HEK293T (cell line): ENCODE measurements at regions of chr15 and their contacts with region 1.

Region 1: GRCh38 chr15:78299101-78299930 is at the start of gene SKIC8:
- DNase-seq: peak; percentile 99

Region 2: DNA sequence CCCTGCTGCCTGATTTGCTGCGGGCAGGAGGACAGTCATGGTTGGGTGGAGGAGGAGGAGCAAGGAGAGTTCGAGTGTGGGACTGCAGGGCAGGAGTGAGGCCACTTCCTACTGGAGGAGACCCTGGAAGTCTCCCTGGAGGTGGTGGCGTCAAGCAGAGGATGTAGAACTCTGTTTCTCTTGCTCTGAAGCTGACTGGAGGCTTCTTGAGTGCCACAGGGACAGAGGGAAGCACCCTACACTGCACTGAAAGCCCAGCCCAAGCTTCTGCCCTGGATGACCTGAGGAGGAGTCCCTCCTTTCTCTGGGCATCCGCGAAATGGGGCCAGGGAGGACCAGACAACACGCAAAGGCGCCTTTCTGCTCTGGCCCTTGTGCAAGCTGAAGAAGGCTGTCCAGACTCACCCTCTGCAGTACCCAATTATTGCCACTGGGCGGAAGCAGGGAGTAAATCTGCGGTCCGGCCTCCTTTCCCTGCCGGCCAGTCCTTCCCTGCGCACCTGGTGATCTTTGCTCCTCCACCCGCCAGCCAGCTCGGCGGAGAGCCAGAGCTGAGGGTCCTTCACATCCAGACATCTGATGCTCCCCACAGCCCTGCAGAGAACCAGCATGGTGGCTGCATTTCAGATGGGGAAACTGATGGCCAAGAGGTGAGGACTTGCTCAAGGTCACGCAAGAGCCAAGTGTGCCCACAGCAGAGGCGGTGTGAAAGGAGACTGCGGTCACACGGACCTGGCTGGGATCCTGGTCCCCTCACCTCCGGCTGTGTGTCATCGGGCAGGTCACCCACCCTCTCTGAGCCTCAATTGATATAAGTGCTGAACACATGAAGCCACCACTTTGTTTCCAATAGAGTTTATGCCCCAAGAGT is 428.9 kb before region 1 on chr15:
- CTCF ChIA-PET with region 1: no interaction called
- POLR2A ChIA-PET with region 1: no interaction called
- DNase-seq: peak; percentile 78

Region 3: DNA sequence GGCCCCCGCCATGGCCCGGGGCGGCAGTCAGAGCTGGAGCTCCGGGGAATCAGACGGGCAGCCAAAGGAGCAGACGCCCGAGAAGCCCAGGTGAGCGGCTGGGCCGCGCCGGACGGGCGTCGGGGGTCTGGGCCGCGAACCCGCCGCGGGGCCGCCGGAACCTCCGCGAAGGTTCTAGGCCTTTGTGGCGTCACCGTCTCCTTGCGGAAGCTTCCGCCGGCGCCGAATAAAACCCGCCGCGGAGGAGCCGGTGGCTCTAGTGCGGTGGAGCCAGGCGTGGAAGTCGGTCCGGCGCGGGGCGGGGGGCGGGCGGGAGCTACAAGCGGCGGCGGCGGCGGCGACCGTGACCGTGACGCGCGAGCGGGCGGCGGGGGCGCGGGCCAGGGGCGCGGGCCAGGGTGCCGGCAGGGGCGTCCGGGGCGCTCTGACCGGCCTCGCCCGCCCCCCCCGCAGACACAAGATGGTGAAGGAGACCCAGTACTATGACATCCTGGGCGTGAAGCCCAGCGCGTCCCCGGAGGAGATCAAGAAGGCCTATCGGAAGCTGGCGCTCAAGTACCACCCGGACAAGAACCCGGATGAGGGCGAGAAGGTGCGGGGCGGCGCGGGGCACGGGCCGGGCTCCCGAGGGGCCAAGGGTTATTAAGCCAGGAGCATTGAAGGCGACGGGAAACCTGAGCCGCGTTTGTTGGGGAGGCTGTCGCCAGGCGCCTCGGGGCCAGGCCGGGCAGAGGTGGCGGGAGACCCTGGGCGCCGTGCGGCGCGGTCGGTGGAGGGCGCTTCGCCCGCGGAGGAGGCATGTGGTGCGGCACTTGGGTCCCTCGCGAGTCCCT is 34.8 kb before region 1 on chr15 and contains the start of gene DNAJA4:
- CTCF ChIA-PET with region 1: interaction called, 3 read pairs
- POLR2A ChIA-PET with region 1: interaction called, 11 read pairs
- DNase-seq: no peak

Region 4: DNA sequence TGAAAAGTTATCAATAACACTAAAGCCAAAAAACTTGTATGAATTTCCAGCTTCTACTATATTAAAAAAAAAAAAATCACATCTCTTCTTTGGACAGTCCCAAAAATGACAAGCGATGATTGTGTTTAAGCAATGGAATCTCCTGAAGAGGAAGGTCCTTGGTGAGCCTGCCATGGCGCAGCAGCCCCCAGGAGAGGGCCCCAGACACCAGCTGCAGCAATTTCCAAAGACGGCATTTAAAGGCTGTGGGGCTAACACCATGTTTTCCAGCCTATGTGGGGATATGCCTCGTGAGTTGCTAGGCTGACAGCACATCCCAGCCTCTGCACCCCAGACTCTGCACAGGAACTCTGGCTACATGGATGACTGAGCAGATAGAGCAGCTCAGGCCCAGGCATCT is 14.6 kb before region 1 on chr15:
- CTCF ChIA-PET with region 1: no interaction called
- POLR2A ChIA-PET with region 1: interaction called, 36 read pairs
- DNase-seq: peak; percentile 23

Region 5: GRCh38 chr15:78315686-78316282 is 16.5 kb after region 1 on chr15:
- CTCF ChIA-PET with region 1: interaction called, 3 read pairs
- POLR2A ChIA-PET with region 1: interaction called, 16 read pairs
- DNase-seq: peak; percentile 66

Region 6: GRCh38 chr15:78322243-78322642 is 22.9 kb after region 1 on chr15:
- CTCF ChIA-PET with region 1: no interaction called
- POLR2A ChIA-PET with region 1: interaction called, 11 read pairs
- DNase-seq: no peak

Region 7: GRCh38 chr15:78353093-78353492 is 53.8 kb after region 1 on chr15:
- CTCF ChIA-PET with region 1: no interaction called
- POLR2A ChIA-PET with region 1: no interaction called
- DNase-seq: peak; percentile 59

Region 8: DNA sequence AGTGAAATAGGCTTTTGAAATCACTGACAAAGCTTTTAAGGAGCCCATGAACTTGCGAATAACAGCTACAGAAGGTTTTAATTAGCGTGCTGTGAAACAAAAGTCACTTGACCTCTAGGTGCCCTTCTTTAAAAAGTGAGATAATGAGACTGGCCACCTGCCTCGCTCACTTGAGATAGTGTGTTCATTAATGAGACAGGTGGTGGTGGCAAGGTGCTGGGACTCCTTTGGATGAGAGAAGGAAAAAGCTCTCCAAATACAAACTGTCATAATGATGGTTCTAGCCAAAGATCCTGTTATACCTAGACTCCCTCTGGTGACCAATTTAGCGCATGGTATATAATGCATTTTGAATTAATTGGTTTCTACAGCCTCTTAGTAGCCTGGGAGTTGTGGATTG is 116.0 kb after region 1 on chr15:
- CTCF ChIA-PET with region 1: interaction called, 3 read pairs
- POLR2A ChIA-PET with region 1: interaction called, 15 read pairs
- DNase-seq: peak; percentile 54

Region 9: GRCh38 chr15:78565097-78565951 is 266.0 kb after region 1 on chr15 and contains the start of gene CHRNA5:
- CTCF ChIA-PET with region 1: no interaction called
- POLR2A ChIA-PET with region 1: interaction called, 18 read pairs
- DNase-seq: peak; percentile 87